Thyroid gland (tissue), 4 donors: ENCODE measurements at regions of chr22 and their contacts with region 1.

Region 1: GRCh38 chr22:30920407-30920806 is 48.2 kb downstream of the MORC2 start:
- DNase-seq: peak; percentile 75 to 83
- H3K4me3 ChIP-seq: no peak overlapping the region
- H3K27ac ChIP-seq: no peak overlapping the region
- H3K4me1 ChIP-seq: no peaks in the 10 kb centered on the region
- H3K27me3 ChIP-seq: no peaks in the 10 kb centered on the region
- CTCF ChIP-seq: peak; percentile 57 to 91 (median 78)
- POLR2A ChIP-seq: no peak

Region 2: GRCh38 chr22:30634471-30635233 is 285.8 kb before region 1 on chr22:
- intact Hi-C with region 1: loop called (anchors 2 kb)
- DNase-seq: peak; percentile 82 to 86
- H3K4me3 ChIP-seq: peak overlapping the region in 1 of 3 donors; percentile 60
- H3K27ac ChIP-seq: peak overlapping the region; percentile 73 to 93 (median 80)
- H3K4me1 ChIP-seq: peaks cover 19 to 28% of the 10 kb centered on the region in 2 donors
- H3K27me3 ChIP-seq: no peaks in the 10 kb centered on the region
- CTCF ChIP-seq: peak; percentile 88 to 96 (median 94)
- POLR2A ChIP-seq: no peak

Region 3: GRCh38 chr22:31148953-31149627 is 228.7 kb after region 1 on chr22:
- intact Hi-C with region 1: no loop called
- DNase-seq: peak; percentile 85 to 87
- H3K4me3 ChIP-seq: no peak overlapping the region
- H3K27ac ChIP-seq: peak overlapping the region; percentile 33 to 81 (median 72)
- H3K4me1 ChIP-seq: peaks cover 0 to 11% of the 10 kb centered on the region in 2 donors
- H3K27me3 ChIP-seq: no peaks in the 10 kb centered on the region
- CTCF ChIP-seq: peak; percentile 79 to 99 (median 95)
- POLR2A ChIP-seq: no peak